Activated T-helper 2 cell treated with anti-CD3 and anti-CD28 coated beads, Interferon-gamma antibody, Interleukin-2, Interleukin-4, amounts not matched to agents 10 μg/mL and 5 μg/mL and 100 μg/mL, durations not matched to agents 14 hours and 24 hours and 36 hours (primary cell): ENCODE measurements at regions of chr3 and their contacts with region 1.

Region 1: GRCh38 chr3:45841757-45842491 is at the start of gene LZTFL1:
- DNase-seq: peak; percentile 83
- H3K4me3 Mint-ChIP-seq: peak within 1 kb of the TSS; percentile 88
- H3K27ac Mint-ChIP-seq: no peak within 1 kb of the TSS
- H3K4me1 Mint-ChIP-seq: peaks cover 20% of the 10 kb centered on the region
- H3K27me3 Mint-ChIP-seq: peaks cover 73% of the 10 kb centered on the region
- total RNA-seq, gene LZTFL1: 3.2 and 4.6 TPM in 2 replicates

Region 2: DNA sequence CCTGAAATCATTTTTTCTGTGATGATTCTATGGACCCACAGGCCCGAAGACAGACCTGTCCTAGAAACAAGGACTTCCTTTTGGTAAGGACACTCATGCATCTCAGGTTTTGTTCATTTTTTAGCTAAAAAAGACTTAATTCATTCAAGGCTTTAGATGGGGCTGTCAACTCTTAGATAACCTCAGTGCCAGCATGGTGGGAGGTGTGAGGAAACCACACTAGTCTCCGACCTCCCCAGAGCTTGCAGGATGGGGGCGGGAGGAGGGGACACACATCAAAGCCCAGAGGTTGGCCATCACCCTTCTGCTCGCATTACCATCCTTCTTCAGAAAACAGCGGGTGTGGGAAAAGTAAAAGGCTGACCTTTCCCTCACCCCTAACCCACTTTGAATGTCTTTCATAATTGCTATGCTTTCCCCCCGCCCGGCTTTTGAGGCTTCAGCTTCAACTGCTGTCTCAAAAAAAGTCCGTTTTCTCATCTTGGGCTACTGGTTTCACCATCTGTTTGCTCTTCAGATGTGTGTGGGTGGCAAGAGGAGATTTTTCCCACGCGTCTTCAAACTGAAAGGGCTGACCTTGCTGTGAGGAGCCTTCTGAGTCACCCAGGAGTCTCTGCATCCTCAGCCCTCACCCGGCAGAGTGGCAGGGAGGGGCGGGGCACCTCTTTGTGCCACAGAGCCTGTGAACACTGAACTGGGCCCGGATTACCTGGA is 73.8 kb after region 1 on chr3:
- intact Hi-C with region 1: loop called (anchors 5 kb)
- DNase-seq: peak; percentile 68
- H3K4me3 Mint-ChIP-seq: peak overlapping the region; percentile 23
- H3K27ac Mint-ChIP-seq: peak overlapping the region; percentile 51
- H3K4me1 Mint-ChIP-seq: peaks cover 25% of the 10 kb centered on the region
- H3K27me3 Mint-ChIP-seq: peaks cover 38% of the 10 kb centered on the region